Activated CD4-positive, alpha-beta T cell treated with anti-CD3 and anti-CD28 coated beads for 36 hours (primary cell): ENCODE measurements at regions of chr18 and their contacts with region 1.

Region 1: GRCh38 chr18:42459873-42460272 is 504.8 kb downstream of the PIK3C3 start:
- DNase-seq: no peak
- ATAC-seq: no peak
- H3K4me3 Mint-ChIP-seq: no peak overlapping the region
- H3K27ac Mint-ChIP-seq: no peak overlapping the region
- H3K4me1 Mint-ChIP-seq: no peaks in the 10 kb centered on the region
- H3K27me3 Mint-ChIP-seq: no peaks in the 10 kb centered on the region

Region 2: GRCh38 chr18:42545825-42546224 is 86.0 kb after region 1 on chr18:
- CTCF ChIA-PET with region 1: no interaction called
- POLR2A ChIA-PET with region 1: no interaction called
- intact Hi-C with region 1: no loop called
- DNase-seq: no peak
- ATAC-seq: no peak
- H3K4me3 Mint-ChIP-seq: no peak overlapping the region
- H3K27ac Mint-ChIP-seq: no peak overlapping the region
- H3K4me1 Mint-ChIP-seq: no peaks in the 10 kb centered on the region
- H3K27me3 Mint-ChIP-seq: no peaks in the 10 kb centered on the region

Region 3: GRCh38 chr18:42606886-42607495 is 147.1 kb after region 1 on chr18:
- CTCF ChIA-PET with region 1: no interaction called
- POLR2A ChIA-PET with region 1: interaction called, 12 read pairs
- intact Hi-C with region 1: no loop called
- DNase-seq: no peak
- ATAC-seq: no peak
- H3K4me3 Mint-ChIP-seq: no peak overlapping the region
- H3K27ac Mint-ChIP-seq: no peak overlapping the region
- H3K4me1 Mint-ChIP-seq: no peaks in the 10 kb centered on the region
- H3K27me3 Mint-ChIP-seq: no peaks in the 10 kb centered on the region

Region 4: GRCh38 chr18:42931491-42931890 is 471.6 kb after region 1 on chr18:
- CTCF ChIA-PET with region 1: no interaction called
- POLR2A ChIA-PET with region 1: no interaction called
- intact Hi-C with region 1: no loop called
- DNase-seq: no peak
- ATAC-seq: no peak
- H3K4me3 Mint-ChIP-seq: no peak overlapping the region
- H3K27ac Mint-ChIP-seq: no peak overlapping the region
- H3K4me1 Mint-ChIP-seq: no peaks in the 10 kb centered on the region
- H3K27me3 Mint-ChIP-seq: no peaks in the 10 kb centered on the region